Activated CD4-positive, alpha-beta memory T cell treated with anti-CD3 and anti-CD28 coated beads for 36 hours (primary cell): ENCODE measurements at regions of chr14 and their contacts with region 1.

Region 1: GRCh38 chr14:36315159-36315853 is 5.1 kb downstream of the MBIP start:
- DNase-seq: peak; percentile 49
- H3K4me3 Mint-ChIP-seq: peak overlapping the region; percentile 50
- H3K27ac Mint-ChIP-seq: peak overlapping the region; percentile 79
- H3K4me1 Mint-ChIP-seq: peaks cover 38% of the 10 kb centered on the region
- H3K27me3 Mint-ChIP-seq: no peaks in the 10 kb centered on the region

Region 2: GRCh38 chr14:34461334-34462131 is 1853.8 kb before region 1 on chr14:
- CTCF ChIA-PET with region 1: no interaction called
- POLR2A ChIA-PET with region 1: no interaction called
- intact Hi-C with region 1: loop called (anchors 10 kb)
- DNase-seq: peak; percentile 46
- H3K4me3 Mint-ChIP-seq: peak overlapping the region; percentile 91
- H3K27ac Mint-ChIP-seq: peak overlapping the region; percentile 76
- H3K4me1 Mint-ChIP-seq: peaks cover 14% of the 10 kb centered on the region
- H3K27me3 Mint-ChIP-seq: no peaks in the 10 kb centered on the region

Region 3: GRCh38 chr14:35932659-35933322 is 382.5 kb before region 1 on chr14:
- CTCF ChIA-PET with region 1: no interaction called
- POLR2A ChIA-PET with region 1: no interaction called
- intact Hi-C with region 1: loop called (anchors 5 kb)
- DNase-seq: peak; percentile 67
- H3K4me3 Mint-ChIP-seq: peak overlapping the region; percentile 54
- H3K27ac Mint-ChIP-seq: no peak overlapping the region
- H3K4me1 Mint-ChIP-seq: peaks cover 19% of the 10 kb centered on the region
- H3K27me3 Mint-ChIP-seq: no peaks in the 10 kb centered on the region

Region 4: DNA sequence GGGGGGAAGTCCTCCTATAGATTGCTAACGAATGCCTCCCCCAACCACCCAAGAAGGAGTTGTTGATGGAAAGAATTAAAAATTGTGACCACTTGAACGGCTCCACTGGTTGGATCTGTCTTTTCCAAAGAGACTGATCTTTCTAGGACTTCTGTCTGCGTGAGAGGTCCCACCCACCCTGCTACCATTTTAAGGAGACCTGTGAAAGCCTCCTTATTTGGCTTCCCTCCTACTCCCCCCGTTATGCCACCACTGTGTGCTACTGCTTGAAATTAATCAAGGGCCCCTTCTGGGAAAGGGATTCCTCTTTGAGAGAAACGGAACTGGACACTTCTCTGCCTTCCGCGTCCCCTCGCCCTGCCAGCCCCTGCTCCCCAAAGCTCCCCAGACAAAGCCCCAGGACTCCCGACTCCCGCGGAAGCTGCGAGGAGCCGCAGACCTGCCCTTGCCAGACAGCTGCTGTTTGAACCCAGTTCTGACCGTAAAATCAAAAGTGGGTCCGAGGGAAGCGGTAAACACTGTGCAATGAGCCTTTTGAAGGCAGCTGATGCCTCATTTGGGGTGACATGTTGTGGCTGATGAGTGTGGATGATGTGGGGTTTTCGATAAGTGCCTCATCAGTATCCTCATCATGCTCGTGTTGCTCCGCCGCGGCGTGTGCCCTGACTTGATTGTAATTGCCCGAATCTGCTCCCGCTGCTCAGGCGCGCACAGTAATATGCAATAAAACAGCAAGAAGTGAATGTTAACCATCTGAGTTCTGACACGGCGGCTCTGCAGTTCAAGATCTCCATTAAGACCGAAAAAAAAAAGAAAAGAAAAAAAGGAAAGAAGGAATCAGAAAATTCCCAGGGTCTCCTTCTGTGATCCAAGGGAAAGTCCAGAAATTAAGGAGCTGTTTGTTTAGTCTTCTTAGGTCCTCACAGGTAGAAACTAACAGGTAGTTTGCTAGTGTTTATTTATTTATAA is 43.1 kb before region 1 on chr14:
- CTCF ChIA-PET with region 1: no interaction called
- POLR2A ChIA-PET with region 1: no interaction called
- intact Hi-C with region 1: loop called (anchors 5 kb)
- DNase-seq: peak; percentile 61
- H3K4me3 Mint-ChIP-seq: peak overlapping the region; percentile 68
- H3K27ac Mint-ChIP-seq: no peak overlapping the region
- H3K4me1 Mint-ChIP-seq: peaks cover 7% of the 10 kb centered on the region
- H3K27me3 Mint-ChIP-seq: peaks cover 43% of the 10 kb centered on the region

Region 5: DNA sequence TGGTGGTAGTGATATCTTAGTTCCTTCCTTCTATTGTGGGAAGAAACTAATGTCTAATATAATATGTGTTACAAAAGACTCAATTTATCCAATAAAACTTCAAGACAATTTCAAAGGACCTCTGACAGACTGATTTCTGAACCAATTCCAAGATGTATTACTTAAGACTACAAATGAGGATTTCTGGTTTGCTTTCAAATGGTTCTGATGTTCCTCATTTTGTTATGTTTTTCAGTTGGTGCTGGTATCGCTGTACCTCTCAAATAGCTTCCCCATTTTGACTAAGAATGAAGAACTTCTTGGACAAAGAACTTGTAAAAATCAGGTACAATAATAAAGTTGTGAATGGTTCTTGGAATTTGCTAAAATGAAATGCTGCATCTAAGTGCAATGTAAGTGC is 24.5 kb after region 1 on chr14:
- CTCF ChIA-PET with region 1: interaction called, 3 read pairs
- POLR2A ChIA-PET with region 1: interaction called, 4 read pairs
- intact Hi-C with region 1: loop called (anchors 1 kb)
- DNase-seq: no peak
- H3K4me3 Mint-ChIP-seq: no peak overlapping the region
- H3K27ac Mint-ChIP-seq: no peak overlapping the region
- H3K4me1 Mint-ChIP-seq: peaks cover 4% of the 10 kb centered on the region
- H3K27me3 Mint-ChIP-seq: peaks cover 29% of the 10 kb centered on the region

Region 6: GRCh38 chr14:36478782-36479181 is 163.5 kb after region 1 on chr14:
- CTCF ChIA-PET with region 1: no interaction called
- POLR2A ChIA-PET with region 1: no interaction called
- intact Hi-C with region 1: loop called (anchors 5 kb)
- DNase-seq: peak; percentile 10
- H3K4me3 Mint-ChIP-seq: no peak overlapping the region
- H3K27ac Mint-ChIP-seq: no peak overlapping the region
- H3K4me1 Mint-ChIP-seq: no peaks in the 10 kb centered on the region
- H3K27me3 Mint-ChIP-seq: peaks cover 6% of the 10 kb centered on the region

Region 7: DNA sequence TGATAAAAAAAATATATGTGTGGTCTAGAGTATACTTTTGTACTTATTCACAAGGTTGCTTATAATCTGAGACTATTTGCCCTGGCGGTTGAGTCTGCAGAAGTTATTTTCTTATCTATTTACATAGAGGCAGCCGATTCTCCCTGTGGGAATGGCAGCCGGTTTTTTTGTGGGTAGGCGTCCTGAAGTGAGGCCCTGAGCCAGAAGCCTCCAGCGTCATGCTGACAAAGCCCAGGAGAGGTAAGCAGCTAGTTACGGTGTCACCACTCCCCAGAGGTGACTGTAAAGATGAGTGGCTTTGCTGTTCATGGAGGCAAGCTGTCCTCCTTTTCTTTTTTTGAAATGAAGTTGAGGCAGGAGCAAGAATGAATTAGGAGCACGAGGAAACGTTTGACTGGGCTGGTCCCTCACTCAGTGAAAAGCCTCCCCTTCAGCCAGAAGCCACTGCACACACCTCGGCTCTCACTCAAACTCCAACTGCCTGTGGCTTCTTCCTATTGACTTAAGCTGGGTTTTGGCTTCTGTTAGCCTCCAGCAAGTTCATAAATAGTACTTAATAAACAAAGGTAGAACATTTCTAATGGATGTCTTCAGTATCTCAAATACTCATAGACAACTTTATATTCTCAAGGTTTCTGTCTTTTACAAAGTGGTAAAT is 367.9 kb after region 1 on chr14:
- CTCF ChIA-PET with region 1: no interaction called
- POLR2A ChIA-PET with region 1: no interaction called
- intact Hi-C with region 1: no loop called
- DNase-seq: no peak
- H3K4me3 Mint-ChIP-seq: no peak overlapping the region
- H3K27ac Mint-ChIP-seq: no peak overlapping the region
- H3K4me1 Mint-ChIP-seq: no peaks in the 10 kb centered on the region
- H3K27me3 Mint-ChIP-seq: no peaks in the 10 kb centered on the region